ENCODE measurements at regions of chr10 and their contacts with region 1.

Region 1: GRCh38 chr10:63521416-63522276 is 445 bp downstream of the REEP3 start:
- DNase-seq: peak; percentile 36 to 72 (median 62)
- ATAC-seq: peak; percentile 68 to 77
- H3K4me3 Mint-ChIP-seq: peak overlapping the region; percentile 77 to 94 (median 84)
- H3K27ac Mint-ChIP-seq: peak overlapping the region; percentile 59 to 95 (median 90)
- H3K4me1 Mint-ChIP-seq: peaks cover 40 to 67% (median 66%) of the 10 kb centered on the region in 4 donors
- H3K27me3 Mint-ChIP-seq: no peaks in the 10 kb centered on the region

Region 2: DNA sequence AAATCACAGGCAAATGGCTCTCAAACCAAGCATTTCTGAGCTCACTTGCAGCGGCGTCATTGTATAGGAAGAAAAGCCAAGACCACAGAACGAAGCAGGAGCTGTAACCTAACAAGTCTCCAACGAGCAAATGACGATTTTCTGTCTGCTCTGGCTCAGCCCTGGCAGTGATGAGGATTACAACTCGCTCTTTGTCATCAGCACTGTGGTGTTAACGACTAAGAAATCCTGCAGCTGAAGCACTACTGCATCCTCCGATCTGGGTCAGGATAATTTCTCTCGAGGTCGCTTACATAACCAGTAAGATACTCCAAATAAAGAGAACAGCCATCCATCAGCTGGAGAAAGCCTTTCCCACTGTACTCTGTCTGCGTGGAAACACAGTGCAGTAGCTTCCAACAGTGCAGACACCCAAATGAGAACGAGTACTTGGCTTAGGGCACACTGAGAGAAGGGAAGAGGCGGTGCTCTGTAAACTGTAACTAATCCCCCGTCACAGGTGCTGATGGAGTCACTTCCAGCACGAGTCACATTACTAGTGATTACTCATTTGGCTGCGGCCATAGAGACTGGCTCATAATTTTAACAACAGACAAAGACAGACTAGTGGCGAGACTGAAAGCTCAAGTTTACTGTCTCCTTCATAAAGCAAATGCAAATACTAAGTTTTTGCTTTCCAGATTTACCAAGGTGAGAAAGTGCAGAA is 252.7 kb before region 1 on chr10:
- POLR2A ChIA-PET with region 1: interaction called, 12 read pairs
- DNase-seq: peak; percentile 43 to 93 (median 84)
- ATAC-seq: peak; percentile 87 to 94
- H3K4me3 Mint-ChIP-seq: peak overlapping the region; percentile 93 to 100 (median 99)
- H3K27ac Mint-ChIP-seq: peak overlapping the region; percentile 97 to 100 (median 100)
- H3K4me1 Mint-ChIP-seq: peaks cover 7 to 44% (median 15%) of the 10 kb centered on the region in 4 donors
- H3K27me3 Mint-ChIP-seq: no peaks in the 10 kb centered on the region

Region 3: GRCh38 chr10:63603709-63604445 is 82.2 kb after region 1 on chr10:
- POLR2A ChIA-PET with region 1: no interaction called
- DNase-seq: no peak
- ATAC-seq: no peak
- H3K4me3 Mint-ChIP-seq: no peak overlapping the region
- H3K27ac Mint-ChIP-seq: no peak overlapping the region
- H3K4me1 Mint-ChIP-seq: peaks cover 0 to 10% (median 1%) of the 10 kb centered on the region in 4 donors
- H3K27me3 Mint-ChIP-seq: no peaks in the 10 kb centered on the region

Region 4: DNA sequence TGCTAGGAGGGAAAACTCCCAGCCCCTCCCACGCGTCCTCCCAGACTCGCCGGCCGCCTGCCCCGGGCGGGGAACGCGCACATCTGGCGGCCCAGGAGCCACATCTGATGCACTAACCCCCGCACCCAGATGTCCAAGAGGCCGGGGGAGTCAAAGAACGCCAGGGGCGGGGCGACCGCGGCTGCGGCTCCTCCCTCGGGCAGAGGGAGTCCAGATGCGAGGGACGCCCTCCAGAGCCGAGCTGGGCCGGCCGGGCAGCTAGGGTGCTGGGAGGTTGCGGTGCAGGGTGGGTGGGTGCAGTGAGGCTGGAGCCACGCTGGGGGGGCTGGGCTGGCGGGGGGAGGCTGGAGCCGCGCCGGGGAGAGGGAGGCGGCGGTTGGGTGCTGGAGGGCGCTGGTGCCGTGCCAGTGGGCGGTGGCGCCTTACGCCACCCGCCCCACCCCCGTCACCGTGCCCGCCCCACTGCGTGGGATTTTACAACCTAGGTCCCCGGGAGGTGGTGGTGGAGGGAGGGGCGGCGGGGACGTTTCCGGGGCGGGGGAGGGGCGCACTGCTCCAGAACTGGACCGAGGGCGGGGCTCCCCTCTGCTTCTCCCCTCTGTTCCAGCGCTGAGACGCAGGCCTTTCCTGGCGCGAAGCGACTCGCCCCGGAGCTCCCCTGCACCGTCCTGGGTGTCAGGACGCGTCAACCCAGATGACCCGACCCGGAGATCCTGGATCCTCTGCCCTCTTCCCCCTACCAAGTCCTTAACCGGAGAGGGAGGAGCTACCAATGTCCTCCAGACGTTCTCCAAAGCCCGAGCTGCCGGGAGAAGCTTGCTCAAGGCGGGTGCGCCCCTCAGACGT is 108.7 kb after region 1 on chr10:
- POLR2A ChIA-PET with region 1: interaction called, 10 read pairs
- DNase-seq: peak; percentile 53 to 88 (median 66)
- ATAC-seq: peak; percentile 71 to 74
- H3K4me3 Mint-ChIP-seq: peak overlapping the region; percentile 85 to 98 (median 94)
- H3K27ac Mint-ChIP-seq: peak overlapping the region; percentile 11 to 95 (median 91)
- H3K4me1 Mint-ChIP-seq: peaks cover 18 to 35% (median 28%) of the 10 kb centered on the region in 4 donors
- H3K27me3 Mint-ChIP-seq: no peaks in the 10 kb centered on the region

Measured in naive thymus-derived CD8-positive, alpha-beta T cell (primary cell).